Left cardiac atrium (tissue), 4 donors: ENCODE measurements at regions of chr13 and their contacts with region 1.

Region 1: DNA sequence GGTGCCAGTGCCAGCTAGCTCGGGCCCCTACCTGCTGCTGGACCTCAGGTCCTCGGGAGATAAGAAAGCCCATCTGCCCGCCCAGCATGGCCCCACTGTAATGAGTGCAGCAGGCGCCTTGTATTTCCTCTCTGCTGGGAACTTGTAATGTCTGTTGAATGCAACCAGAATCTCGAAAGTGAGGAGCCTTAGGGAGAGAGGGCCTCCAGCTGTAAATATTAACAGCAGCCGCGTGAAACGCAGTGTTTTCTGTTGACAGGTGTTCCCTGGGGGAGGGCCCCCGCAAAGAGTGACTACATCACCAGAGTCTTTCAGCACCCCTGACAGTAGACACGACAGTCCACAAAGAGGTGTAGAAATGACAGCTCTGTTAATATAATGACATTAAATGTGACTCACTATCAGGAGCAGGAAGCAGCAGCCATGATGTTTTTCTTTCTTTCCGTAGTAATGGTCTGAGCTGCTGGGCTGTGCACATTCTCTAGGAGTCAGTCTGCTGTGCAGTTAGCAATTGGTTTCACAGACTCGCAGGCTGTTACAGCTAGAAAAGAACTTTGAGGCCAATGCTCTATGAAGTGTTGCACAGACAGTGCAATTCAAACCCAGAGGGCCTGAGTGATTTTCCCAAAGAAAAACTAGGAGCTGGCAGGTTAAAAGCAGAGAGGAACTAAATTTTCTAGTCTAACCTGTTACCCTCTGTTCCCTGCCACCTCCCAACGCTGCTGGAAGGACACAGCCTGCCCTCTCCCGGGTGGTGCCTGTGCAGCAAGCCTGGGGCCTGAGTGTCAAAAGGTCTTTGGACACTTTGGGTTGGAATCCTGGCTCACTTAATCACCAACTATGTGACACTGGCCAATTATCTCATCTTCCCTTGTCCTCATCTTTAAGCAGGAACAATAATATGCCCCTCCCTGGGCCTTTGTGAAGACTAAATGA is 58.6 kb upstream of the WASF3 start:
- DNase-seq: no peak
- ATAC-seq: peak in 1 of 2 donors; percentile 6

Region 2: GRCh38 chr13:26186118-26186870 is 312.6 kb before region 1 on chr13:
- intact Hi-C with region 1: loop called (anchors 2 to 10 kb)
- DNase-seq: peak; percentile 91
- ATAC-seq: peak; percentile 95 to 98

Region 3: GRCh38 chr13:26254583-26255111 is 244.3 kb before region 1 on chr13:
- intact Hi-C with region 1: loop called in 1 of 2 experiments (anchors 5 kb)
- DNase-seq: peak; percentile 58
- ATAC-seq: peak; percentile 52 to 79

Region 4: GRCh38 chr13:26442541-26442940 is 56.4 kb before region 1 on chr13:
- intact Hi-C with region 1: no loop called
- DNase-seq: no peak
- ATAC-seq: peak in 1 of 2 donors; percentile 96

Region 5: GRCh38 chr13:27383127-27383921 is 884.4 kb after region 1 on chr13:
- intact Hi-C with region 1: no loop called
- DNase-seq: no peak
- ATAC-seq: no peak